ENCODE measurements at regions of chr6 and their contacts with region 1.

Region 1: GRCh38 chr6:56772737-56773184 is 130.1 kb upstream of the DST start:
- DNase-seq: peak; percentile 73 to 89
- ATAC-seq: peak; percentile 95 to 96
- H3K4me3 ChIP-seq: peak overlapping the region in 1 of 4 donors; percentile 22
- H3K27ac ChIP-seq: peak overlapping the region; percentile 85 to 88 (median 86)
- H3K4me1 ChIP-seq: peaks cover 42 to 73% of the 10 kb centered on the region in 2 donors
- H3K27me3 ChIP-seq: no peaks in the 10 kb centered on the region
- CTCF ChIP-seq: no peak
- POLR2A ChIP-seq: no peak

Region 2: DNA sequence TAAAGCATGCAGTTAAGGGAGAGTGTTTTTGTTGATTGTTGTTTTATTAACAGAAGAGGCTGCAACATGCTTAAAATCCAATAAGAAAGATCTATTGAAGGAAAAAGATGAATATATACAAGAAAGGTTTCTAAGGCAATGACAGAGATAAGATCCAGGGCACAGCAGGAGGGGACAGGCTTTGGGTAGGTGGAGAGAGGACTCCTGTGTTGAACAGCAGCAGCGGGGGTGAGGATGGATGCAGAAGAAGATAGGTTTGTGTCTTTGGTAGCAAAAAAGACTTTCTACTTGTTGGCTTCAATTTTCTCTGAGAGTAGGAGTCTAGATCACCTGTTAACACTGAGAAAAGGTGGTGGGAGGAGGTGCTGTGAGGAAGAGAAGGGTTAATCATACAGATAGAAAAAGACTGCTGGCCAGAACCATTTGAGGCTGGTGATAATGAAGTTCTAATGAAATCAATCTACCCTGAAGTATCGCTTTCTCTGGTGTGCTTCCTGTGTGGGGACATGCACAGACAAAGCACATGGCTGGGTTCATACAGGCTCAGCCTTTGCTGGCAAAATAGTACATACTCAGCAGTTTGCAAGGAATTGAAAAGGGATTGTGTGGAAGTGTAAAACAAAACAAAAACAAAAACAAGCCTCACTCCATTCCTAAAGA is 112.9 kb before region 1 on chr6:
- in situ Hi-C with region 1: no loop called
- intact Hi-C with region 1: no loop called
- DNase-seq: no peak
- ATAC-seq: peak; percentile 40 to 48
- H3K4me3 ChIP-seq: no peak overlapping the region
- H3K27ac ChIP-seq: peak overlapping the region; percentile 14 to 47 (median 30)
- H3K4me1 ChIP-seq: peaks cover 34 to 35% of the 10 kb centered on the region in 2 donors
- H3K27me3 ChIP-seq: no peaks in the 10 kb centered on the region
- CTCF ChIP-seq: no peak
- POLR2A ChIP-seq: no peak

Region 3: GRCh38 chr6:56796196-56796532 is 23.4 kb after region 1 on chr6:
- in situ Hi-C with region 1: no loop called
- intact Hi-C with region 1: loop called (anchors 2 kb)
- DNase-seq: no peak
- ATAC-seq: no peak
- H3K4me3 ChIP-seq: no peak overlapping the region
- H3K27ac ChIP-seq: peak overlapping the region; percentile 78 to 93 (median 86)
- H3K4me1 ChIP-seq: peaks cover 79 to 82% of the 10 kb centered on the region in 2 donors
- H3K27me3 ChIP-seq: no peaks in the 10 kb centered on the region
- CTCF ChIP-seq: no peak
- POLR2A ChIP-seq: no peak

Region 4: GRCh38 chr6:56837311-56837894 is 64.6 kb after region 1 on chr6:
- in situ Hi-C with region 1: loop called in 3 of 4 experiments (anchors 5 to 10 kb)
- intact Hi-C with region 1: loop called (anchors 1 kb)
- DNase-seq: no peak
- ATAC-seq: no peak
- H3K4me3 ChIP-seq: no peak overlapping the region
- H3K27ac ChIP-seq: peak overlapping the region; percentile 85 to 98 (median 98)
- H3K4me1 ChIP-seq: peaks cover 59 to 77% of the 10 kb centered on the region in 2 donors
- H3K27me3 ChIP-seq: no peaks in the 10 kb centered on the region
- CTCF ChIP-seq: no peak
- POLR2A ChIP-seq: no peak